SK-N-SH (cell line): ENCODE measurements at regions of chr20 and their contacts with region 1.

Region 1: DNA sequence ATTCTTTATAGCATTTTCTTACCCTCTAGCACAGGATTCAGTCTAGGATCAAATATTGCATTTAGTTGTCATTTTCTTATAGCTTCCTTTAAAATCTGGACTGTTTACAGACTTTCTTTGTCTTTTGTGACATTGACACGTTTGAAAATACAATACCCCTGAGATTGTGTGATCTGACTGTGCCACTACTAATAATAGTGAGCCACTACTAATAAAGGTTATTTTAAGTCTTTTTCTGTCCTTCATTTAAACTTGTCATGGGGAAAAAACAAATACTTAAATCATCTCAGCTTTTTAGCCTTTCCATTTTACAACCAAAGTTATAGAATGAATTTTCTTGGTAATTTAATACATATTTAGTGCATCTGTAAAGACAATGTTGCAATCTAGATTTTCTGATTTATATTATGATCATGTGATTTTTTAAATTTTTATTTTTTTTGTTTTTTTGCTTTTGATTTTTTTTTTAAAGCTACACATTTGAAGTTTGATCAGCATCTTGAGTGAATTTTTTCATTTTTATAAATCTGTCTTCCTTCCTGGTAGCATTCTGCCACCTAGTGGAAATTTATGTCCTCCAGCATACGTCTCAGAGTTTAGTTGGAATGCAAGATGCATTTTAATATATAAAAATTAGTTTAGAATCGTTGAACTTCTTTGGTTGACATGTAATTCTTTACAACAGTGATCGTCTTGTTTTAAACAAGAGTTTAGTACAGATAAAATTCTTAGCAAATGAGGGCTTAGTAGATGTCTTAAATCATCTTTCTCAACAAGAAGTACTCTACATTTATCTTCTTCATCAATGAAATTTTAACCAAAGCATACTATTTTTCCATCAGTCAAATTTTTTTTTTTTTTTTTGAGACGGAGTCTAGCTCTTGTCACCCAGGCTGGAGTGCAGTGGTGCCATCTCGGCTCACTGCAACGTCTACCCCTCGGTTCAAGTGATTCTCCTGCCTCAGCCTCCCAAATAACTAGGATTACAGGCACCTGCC is 119.4 kb downstream of the NCOA3 start:
- DNase-seq: peak; percentile 39
- H3K4me3 ChIP-seq: peak overlapping the region in 1 of 2 experiments; percentile 28; a peak in 1 of 4 replicates
- H3K27ac ChIP-seq: peak overlapping the region in 1 of 2 experiments; percentile 12; a peak in 1 of 4 replicates
- H3K4me1 ChIP-seq: no peaks in the 10 kb centered on the region; a peak in 1 of 4 replicates
- H3K27me3 ChIP-seq: no peaks in the 10 kb centered on the region
- CTCF ChIP-seq: peak; percentile 96
- EP300 ChIP-seq: no peak
- RAD21 ChIP-seq: peak; percentile 90

Region 2: GRCh38 chr20:47196091-47197081 is 424.7 kb before region 1 on chr20:
- CTCF ChIA-PET with region 1: interaction called, 19 read pairs
- POLR2A ChIA-PET with region 1: no interaction called
- DNase-seq: peak; percentile 83
- H3K4me3 ChIP-seq: no peak overlapping the region; a peak in 1 of 4 replicates
- H3K27ac ChIP-seq: no peak overlapping the region
- H3K4me1 ChIP-seq: peaks cover 0 to 2% of the 10 kb centered on the region in 2 experiments; a peak in 1 of 4 replicates
- H3K27me3 ChIP-seq: no peaks in the 10 kb centered on the region
- CTCF ChIP-seq: peak; percentile 94
- EP300 ChIP-seq: no peak
- RAD21 ChIP-seq: peak; percentile 93

Region 3: GRCh38 chr20:47501483-47502270 is 119.4 kb before region 1 on chr20 and contains the start of gene NCOA3:
- CTCF ChIA-PET with region 1: interaction called, 13 read pairs
- POLR2A ChIA-PET with region 1: no interaction called
- DNase-seq: peak; percentile 98
- H3K4me3 ChIP-seq: peak within 1 kb of the TSS; percentile 73 to 87
- H3K27ac ChIP-seq: peak within 1 kb of the TSS; percentile 83 to 90
- H3K4me1 ChIP-seq: peaks cover 0 to 9% of the 10 kb centered on the region in 2 experiments; a peak in 3 of 4 replicates
- H3K27me3 ChIP-seq: no peaks in the 10 kb centered on the region
- CTCF ChIP-seq: peak; percentile 37
- EP300 ChIP-seq: peak; percentile 17 to 44; a peak in 2 of 4 replicates
- RAD21 ChIP-seq: no peak; the same call in 1 of the 2 replicates
- polyA plus RNA-seq, gene NCOA3: 5.8 and 8.3 TPM in 2 replicates

Region 4: DNA sequence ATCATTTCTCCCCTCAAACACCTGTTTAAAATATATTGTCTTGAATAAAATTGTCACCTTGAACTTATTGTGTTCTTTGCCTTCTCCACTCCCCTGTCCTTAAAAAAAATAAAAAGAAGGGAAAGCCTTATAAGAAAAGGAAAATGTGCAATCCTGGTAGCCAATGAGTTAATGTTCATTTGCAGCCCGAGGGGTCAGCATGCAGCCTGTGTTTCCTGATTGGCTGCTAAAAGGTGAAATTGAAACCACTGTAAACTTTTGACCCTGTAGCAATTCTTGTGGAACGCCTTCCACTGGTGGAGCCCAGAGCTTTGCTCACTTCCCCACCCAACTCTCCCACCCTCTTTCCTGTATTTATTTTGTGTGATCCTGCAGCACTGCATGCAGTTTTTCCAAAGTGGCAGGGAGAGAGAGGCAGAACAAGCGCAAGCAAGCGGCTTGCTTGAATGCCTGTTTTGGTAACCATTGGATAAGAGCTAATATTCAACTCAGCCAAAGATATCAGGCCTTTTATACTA is 44.5 kb before region 1 on chr20:
- CTCF ChIA-PET with region 1: interaction called, 12 read pairs
- POLR2A ChIA-PET with region 1: no interaction called
- DNase-seq: peak; percentile 72
- H3K4me3 ChIP-seq: peak overlapping the region in 1 of 2 experiments; percentile 21; a peak in 1 of 4 replicates
- H3K27ac ChIP-seq: peak overlapping the region; percentile 44 to 95
- H3K4me1 ChIP-seq: peaks cover 41 to 43% of the 10 kb centered on the region in 2 experiments
- H3K27me3 ChIP-seq: no peaks in the 10 kb centered on the region
- CTCF ChIP-seq: no peak
- EP300 ChIP-seq: peak in 1 of 2 experiments; percentile 48; a peak in 1 of 4 replicates
- RAD21 ChIP-seq: peak; percentile 18; the same call in 1 of the 2 replicates

Region 5: DNA sequence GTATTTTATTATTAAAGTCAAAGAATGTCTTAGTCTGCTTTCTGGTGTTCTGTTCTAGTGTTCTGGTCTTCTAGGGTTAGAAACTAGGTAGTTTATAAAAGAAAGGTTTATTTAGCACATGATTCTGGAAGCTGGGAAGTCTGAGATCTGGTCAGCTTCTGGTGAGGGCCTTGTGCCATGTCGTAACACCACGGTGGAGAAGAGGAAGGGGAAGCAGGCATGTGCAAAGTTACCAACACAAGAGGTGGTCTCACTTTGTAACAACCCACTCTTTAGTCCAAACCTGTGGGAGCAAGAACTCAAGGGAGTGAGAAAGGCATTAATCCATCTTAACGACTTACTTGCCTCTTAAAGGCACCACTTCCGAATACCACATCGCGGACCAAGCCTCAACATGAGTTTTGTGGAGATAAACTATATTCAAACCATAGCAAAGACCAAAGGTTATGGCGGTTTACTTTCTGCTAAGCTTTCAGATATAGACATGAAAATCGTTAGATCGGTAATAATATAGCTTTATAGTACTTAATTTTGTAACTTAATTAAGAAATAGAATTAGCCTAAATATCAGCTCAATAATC is 20.1 kb before region 1 on chr20:
- CTCF ChIA-PET with region 1: interaction called, 11 read pairs
- POLR2A ChIA-PET with region 1: no interaction called
- DNase-seq: no peak
- H3K4me3 ChIP-seq: no peak overlapping the region
- H3K27ac ChIP-seq: no peak overlapping the region
- H3K4me1 ChIP-seq: peaks cover 3 to 6% of the 10 kb centered on the region in 2 experiments; a peak in 3 of 4 replicates
- H3K27me3 ChIP-seq: no peaks in the 10 kb centered on the region
- CTCF ChIP-seq: no peak
- EP300 ChIP-seq: no peak
- RAD21 ChIP-seq: no peak

Region 6: DNA sequence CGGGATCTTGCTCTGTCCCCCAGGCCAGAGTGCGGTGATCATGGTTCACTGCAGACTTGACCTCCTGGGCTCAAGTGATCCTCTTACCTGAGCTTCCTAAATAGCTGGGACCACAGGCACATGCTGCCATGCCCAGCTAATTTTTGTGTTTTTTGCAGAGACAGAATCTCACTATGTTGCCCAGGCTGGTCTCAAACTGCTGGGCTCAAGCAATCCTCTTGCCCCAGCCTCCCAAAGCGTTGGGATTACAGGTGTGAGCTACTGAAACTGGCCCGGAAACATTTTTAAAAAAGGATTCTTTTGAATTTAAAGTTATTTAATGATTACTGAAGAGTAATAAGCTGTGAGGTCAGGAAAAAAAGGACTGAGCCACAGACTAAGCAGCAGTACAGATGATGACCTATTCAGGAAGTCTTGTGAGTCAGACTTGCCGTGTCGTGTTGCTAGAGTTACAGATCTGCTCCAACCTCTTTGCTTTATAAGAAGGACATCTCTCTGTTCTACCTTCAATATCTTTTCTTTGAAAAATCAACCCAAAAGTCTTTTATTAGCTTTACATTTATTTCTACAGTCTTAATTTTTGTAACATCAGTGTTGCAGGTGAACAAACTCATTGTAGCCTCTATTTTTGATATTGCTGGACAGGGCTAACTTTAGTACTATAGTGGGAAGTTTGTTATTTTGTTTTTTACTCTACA is 10.7 kb before region 1 on chr20:
- CTCF ChIA-PET with region 1: interaction called, 19 read pairs
- POLR2A ChIA-PET with region 1: no interaction called
- DNase-seq: no peak
- H3K4me3 ChIP-seq: no peak overlapping the region
- H3K27ac ChIP-seq: peak overlapping the region in 1 of 2 experiments; percentile 83; a peak in 2 of 4 replicates
- H3K4me1 ChIP-seq: peaks cover 0 to 23% of the 10 kb centered on the region in 2 experiments; a peak in 1 of 4 replicates
- H3K27me3 ChIP-seq: no peaks in the 10 kb centered on the region
- CTCF ChIP-seq: no peak
- EP300 ChIP-seq: no peak
- RAD21 ChIP-seq: no peak

Region 7: DNA sequence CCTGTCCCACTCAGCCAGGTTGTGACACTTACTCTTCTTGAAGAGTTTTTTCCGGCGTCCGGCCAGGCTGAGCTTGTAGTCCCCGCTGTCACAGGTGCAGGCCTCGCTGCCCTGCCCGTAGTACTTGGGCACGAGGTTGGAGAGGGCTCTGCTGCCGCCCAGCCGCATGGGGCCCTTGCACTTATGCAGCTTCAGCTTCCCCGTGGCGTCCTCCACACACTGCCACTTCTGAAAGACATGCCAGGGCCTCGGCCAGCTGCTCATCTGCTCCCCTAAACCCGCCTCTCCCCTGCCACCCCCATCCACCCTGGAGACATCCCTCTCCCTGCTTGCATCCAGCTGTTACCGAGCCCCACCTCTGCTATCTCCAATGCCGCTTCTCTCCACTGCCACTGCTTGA is 51.1 kb after region 1 on chr20:
- CTCF ChIA-PET with region 1: no interaction called
- POLR2A ChIA-PET with region 1: no interaction called
- DNase-seq: no peak
- H3K4me3 ChIP-seq: no peak overlapping the region
- H3K27ac ChIP-seq: no peak overlapping the region
- H3K4me1 ChIP-seq: no peaks in the 10 kb centered on the region; a peak in 1 of 4 replicates
- H3K27me3 ChIP-seq: no peaks in the 10 kb centered on the region
- CTCF ChIP-seq: no peak
- EP300 ChIP-seq: no peak
- RAD21 ChIP-seq: no peak